CD8-positive, alpha-beta T cell (primary cell): ENCODE measurements at regions of chr12 and their contacts with region 1.

Region 1: GRCh38 chr12:51083126-51083833 is at the start of gene CSRNP2:
- DNase-seq: peak; percentile 90 to 97 (median 94)
- ATAC-seq: peak; percentile 99
- H3K4me3 ChIP-seq: peak within 1 kb of the TSS; percentile 88
- H3K4me3 Mint-ChIP-seq: peak within 1 kb of the TSS; percentile 94
- H3K27ac ChIP-seq: peak within 1 kb of the TSS; percentile 61 to 62
- H3K27ac Mint-ChIP-seq: peak within 1 kb of the TSS; percentile 91
- H3K4me1 ChIP-seq: peaks cover 12% of the 10 kb centered on the region
- H3K4me1 Mint-ChIP-seq: peaks cover 36% of the 10 kb centered on the region
- H3K27me3 ChIP-seq: no peaks in the 10 kb centered on the region
- H3K27me3 Mint-ChIP-seq: no peaks in the 10 kb centered on the region
- CTCF ChIP-seq: no peak
- total RNA-seq, gene CSRNP2: 19.5 to 19.9 TPM

Region 2: DNA sequence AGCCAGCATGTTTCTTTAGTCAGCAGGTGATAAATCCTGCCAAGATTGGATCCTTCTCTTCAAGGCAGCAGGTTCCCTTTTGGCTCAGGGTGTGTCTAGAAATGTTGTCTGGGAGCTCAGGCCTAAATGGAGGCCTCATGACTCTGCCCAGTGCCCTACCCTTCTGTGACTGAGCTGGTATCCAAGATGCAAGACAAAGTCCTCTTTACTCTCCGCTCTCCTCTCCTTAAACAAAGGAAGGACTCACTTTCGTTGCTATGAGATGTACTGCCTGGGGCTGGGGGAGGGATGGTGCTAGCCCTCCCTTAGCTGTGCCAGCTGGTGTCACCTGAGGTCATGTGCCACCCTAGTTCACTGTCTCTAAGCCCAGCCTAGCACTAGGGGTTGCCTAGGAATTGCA is 254.4 kb before region 1 on chr12:
- CTCF ChIA-PET with region 1: no interaction called
- POLR2A ChIA-PET with region 1: no interaction called
- intact Hi-C with region 1: no loop called
- DNase-seq: no peak
- ATAC-seq: no peak
- H3K4me3 ChIP-seq: no peak overlapping the region
- H3K4me3 Mint-ChIP-seq: no peak overlapping the region
- H3K27ac ChIP-seq: no peak overlapping the region
- H3K27ac Mint-ChIP-seq: no peak overlapping the region
- H3K4me1 ChIP-seq: no peaks in the 10 kb centered on the region
- H3K4me1 Mint-ChIP-seq: peaks cover 7% of the 10 kb centered on the region
- H3K27me3 ChIP-seq: no peaks in the 10 kb centered on the region
- H3K27me3 Mint-ChIP-seq: peaks cover 2% of the 10 kb centered on the region
- CTCF ChIP-seq: no peak

Region 3: DNA sequence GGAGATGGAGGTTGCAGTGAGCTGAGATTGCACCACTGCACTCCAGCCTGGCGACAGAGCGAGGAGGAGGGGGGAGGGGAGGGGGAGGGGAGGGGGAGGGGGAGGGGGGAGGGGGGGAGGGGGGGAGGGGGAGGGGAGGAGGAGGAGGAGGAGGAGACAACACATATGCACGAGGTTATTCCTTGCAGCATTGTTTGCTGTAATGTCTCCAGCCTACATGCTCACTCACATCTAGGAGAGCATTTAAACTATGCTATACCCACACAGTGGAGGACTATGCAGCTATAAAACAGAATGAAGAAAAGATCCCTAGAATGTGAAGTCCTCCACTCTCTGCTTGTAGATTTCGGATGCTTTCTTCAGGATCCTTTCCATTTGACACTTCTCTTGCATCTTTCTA is 134.5 kb before region 1 on chr12:
- CTCF ChIA-PET with region 1: no interaction called
- POLR2A ChIA-PET with region 1: no interaction called
- intact Hi-C with region 1: no loop called
- DNase-seq: no peak
- ATAC-seq: no peak
- H3K4me3 ChIP-seq: no peak overlapping the region
- H3K4me3 Mint-ChIP-seq: no peak overlapping the region
- H3K27ac ChIP-seq: no peak overlapping the region
- H3K27ac Mint-ChIP-seq: no peak overlapping the region
- H3K4me1 ChIP-seq: no peaks in the 10 kb centered on the region
- H3K4me1 Mint-ChIP-seq: no peaks in the 10 kb centered on the region
- H3K27me3 ChIP-seq: no peaks in the 10 kb centered on the region
- H3K27me3 Mint-ChIP-seq: no peaks in the 10 kb centered on the region
- CTCF ChIP-seq: no peak

Region 4: GRCh38 chr12:51062631-51063397 is 20.5 kb before region 1 on chr12:
- CTCF ChIA-PET with region 1: no interaction called
- POLR2A ChIA-PET with region 1: interaction called, 11 read pairs
- intact Hi-C with region 1: no loop called
- DNase-seq: no peak
- ATAC-seq: no peak
- H3K4me3 ChIP-seq: no peak overlapping the region
- H3K4me3 Mint-ChIP-seq: no peak overlapping the region
- H3K27ac ChIP-seq: no peak overlapping the region
- H3K27ac Mint-ChIP-seq: peak overlapping the region; percentile 39
- H3K4me1 ChIP-seq: no peaks in the 10 kb centered on the region
- H3K4me1 Mint-ChIP-seq: no peaks in the 10 kb centered on the region
- H3K27me3 ChIP-seq: no peaks in the 10 kb centered on the region
- H3K27me3 Mint-ChIP-seq: no peaks in the 10 kb centered on the region
- CTCF ChIP-seq: no peak

Region 5: DNA sequence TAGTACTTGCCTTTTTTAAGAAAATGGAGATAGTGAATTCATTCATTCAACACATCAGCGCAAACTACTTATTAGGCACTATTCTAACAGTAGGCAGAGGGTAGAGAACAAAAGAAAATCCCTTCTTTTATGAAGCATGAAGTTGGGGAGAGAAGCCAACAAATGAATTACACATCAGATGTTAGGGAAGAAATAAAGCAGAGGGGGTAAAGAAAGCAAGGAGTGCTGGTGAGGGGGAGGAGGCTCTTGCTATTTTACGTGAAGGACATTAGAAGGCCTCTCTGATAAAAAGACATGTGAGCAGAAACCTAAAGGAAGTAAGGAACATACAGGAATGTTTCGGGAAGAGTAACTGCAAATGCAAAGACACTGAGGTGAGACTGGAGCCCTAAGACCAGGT is 67.5 kb after region 1 on chr12:
- CTCF ChIA-PET with region 1: no interaction called
- POLR2A ChIA-PET with region 1: no interaction called
- intact Hi-C with region 1: no loop called
- DNase-seq: no peak
- ATAC-seq: no peak
- H3K4me3 ChIP-seq: no peak overlapping the region
- H3K4me3 Mint-ChIP-seq: no peak overlapping the region
- H3K27ac ChIP-seq: no peak overlapping the region
- H3K27ac Mint-ChIP-seq: no peak overlapping the region
- H3K4me1 ChIP-seq: no peaks in the 10 kb centered on the region
- H3K4me1 Mint-ChIP-seq: peaks cover 49% of the 10 kb centered on the region
- H3K27me3 ChIP-seq: no peaks in the 10 kb centered on the region
- H3K27me3 Mint-ChIP-seq: no peaks in the 10 kb centered on the region
- CTCF ChIP-seq: no peak